SK-N-SH (cell line): ENCODE measurements at regions of chr14 and their contacts with region 1.

Region 1: GRCh38 chr14:78010688-78011087 is 159.5 kb upstream of the NRXN3 start:
- DNase-seq: no peak
- H3K4me3 ChIP-seq: no peak overlapping the region
- H3K27ac ChIP-seq: no peak overlapping the region
- H3K4me1 ChIP-seq: no peaks in the 10 kb centered on the region
- H3K27me3 ChIP-seq: no peaks in the 10 kb centered on the region
- CTCF ChIP-seq: no peak
- EP300 ChIP-seq: no peak
- RAD21 ChIP-seq: no peak

Region 2: GRCh38 chr14:77912754-77913556 is 97.7 kb before region 1 on chr14:
- CTCF ChIA-PET with region 1: no interaction called
- POLR2A ChIA-PET with region 1: no interaction called
- DNase-seq: no peak
- H3K4me3 ChIP-seq: no peak overlapping the region
- H3K27ac ChIP-seq: no peak overlapping the region
- H3K4me1 ChIP-seq: peaks cover 0 to 8% of the 10 kb centered on the region in 2 experiments; a peak in 1 of 4 replicates
- H3K27me3 ChIP-seq: no peaks in the 10 kb centered on the region
- CTCF ChIP-seq: no peak
- EP300 ChIP-seq: no peak
- RAD21 ChIP-seq: no peak

Region 3: DNA sequence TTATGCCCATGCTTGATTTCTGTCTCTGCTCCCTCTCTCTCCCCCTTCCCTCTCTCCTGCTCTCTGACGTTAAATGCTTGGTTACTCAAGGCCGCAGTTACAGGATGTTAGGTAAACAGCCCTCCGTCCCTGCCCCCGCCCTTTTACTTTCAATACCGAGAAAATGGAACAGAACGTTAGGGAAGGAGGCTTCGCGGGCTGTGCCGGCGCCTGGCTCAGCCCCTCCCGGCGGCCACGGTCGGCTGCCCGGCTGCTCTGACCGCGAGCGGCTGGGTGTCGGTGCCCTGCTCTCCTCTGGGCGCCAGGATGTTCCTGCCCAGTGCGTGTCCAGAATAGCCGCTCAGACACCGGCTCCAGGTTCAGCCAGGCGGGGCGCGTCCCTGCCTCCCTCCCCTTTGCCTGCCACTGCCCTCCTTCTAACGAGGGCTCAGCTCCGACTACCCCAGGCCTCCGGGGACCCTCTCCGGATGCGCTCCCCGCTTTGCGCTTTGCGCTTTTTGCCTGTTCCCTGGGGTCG is 44.7 kb before region 1 on chr14:
- CTCF ChIA-PET with region 1: no interaction called
- POLR2A ChIA-PET with region 1: no interaction called
- DNase-seq: peak; percentile 80
- H3K4me3 ChIP-seq: peak overlapping the region in 1 of 2 experiments; percentile 21; a peak in 1 of 4 replicates
- H3K27ac ChIP-seq: no peak overlapping the region
- H3K4me1 ChIP-seq: peaks cover 0 to 3% of the 10 kb centered on the region in 2 experiments; a peak in 1 of 4 replicates
- H3K27me3 ChIP-seq: no peaks in the 10 kb centered on the region
- CTCF ChIP-seq: no peak
- EP300 ChIP-seq: no peak
- RAD21 ChIP-seq: no peak

Region 4: GRCh38 chr14:77980475-77981321 is 30.0 kb before region 1 on chr14:
- CTCF ChIA-PET with region 1: no interaction called
- POLR2A ChIA-PET with region 1: no interaction called
- DNase-seq: no peak
- H3K4me3 ChIP-seq: no peak overlapping the region
- H3K27ac ChIP-seq: no peak overlapping the region
- H3K4me1 ChIP-seq: no peaks in the 10 kb centered on the region
- H3K27me3 ChIP-seq: no peaks in the 10 kb centered on the region
- CTCF ChIP-seq: no peak
- EP300 ChIP-seq: no peak
- RAD21 ChIP-seq: no peak

Region 5: DNA sequence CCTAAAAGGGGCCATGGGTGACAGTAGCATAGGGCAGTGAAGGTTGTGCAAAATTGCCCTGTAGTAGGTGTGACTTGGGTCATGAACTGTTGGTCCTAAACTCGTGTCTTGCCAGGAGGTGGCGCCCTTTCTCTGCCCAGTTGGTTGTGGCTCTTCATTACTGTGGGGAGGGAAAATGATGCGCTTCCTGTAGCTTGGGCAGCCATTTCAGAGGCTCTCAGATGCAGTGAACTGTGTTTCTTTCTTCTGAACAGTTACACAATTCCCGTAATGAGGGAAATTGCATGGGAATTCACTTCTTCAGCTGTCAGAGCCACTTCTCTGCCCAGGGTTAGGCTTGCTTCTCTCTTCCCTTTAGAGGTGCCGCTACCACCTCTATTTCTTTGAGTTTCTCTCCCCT is 11.4 kb after region 1 on chr14:
- CTCF ChIA-PET with region 1: interaction called, 12 read pairs
- POLR2A ChIA-PET with region 1: no interaction called
- DNase-seq: peak; percentile 67
- H3K4me3 ChIP-seq: peak overlapping the region in 1 of 2 experiments; percentile 50; a peak in 1 of 4 replicates
- H3K27ac ChIP-seq: no peak overlapping the region
- H3K4me1 ChIP-seq: no peaks in the 10 kb centered on the region
- H3K27me3 ChIP-seq: no peaks in the 10 kb centered on the region
- CTCF ChIP-seq: peak; percentile 39
- EP300 ChIP-seq: no peak
- RAD21 ChIP-seq: peak; percentile 77